CD4-positive, alpha-beta T cell (primary cell): ENCODE measurements at regions of chr5 and their contacts with region 1.

Region 1: DNA sequence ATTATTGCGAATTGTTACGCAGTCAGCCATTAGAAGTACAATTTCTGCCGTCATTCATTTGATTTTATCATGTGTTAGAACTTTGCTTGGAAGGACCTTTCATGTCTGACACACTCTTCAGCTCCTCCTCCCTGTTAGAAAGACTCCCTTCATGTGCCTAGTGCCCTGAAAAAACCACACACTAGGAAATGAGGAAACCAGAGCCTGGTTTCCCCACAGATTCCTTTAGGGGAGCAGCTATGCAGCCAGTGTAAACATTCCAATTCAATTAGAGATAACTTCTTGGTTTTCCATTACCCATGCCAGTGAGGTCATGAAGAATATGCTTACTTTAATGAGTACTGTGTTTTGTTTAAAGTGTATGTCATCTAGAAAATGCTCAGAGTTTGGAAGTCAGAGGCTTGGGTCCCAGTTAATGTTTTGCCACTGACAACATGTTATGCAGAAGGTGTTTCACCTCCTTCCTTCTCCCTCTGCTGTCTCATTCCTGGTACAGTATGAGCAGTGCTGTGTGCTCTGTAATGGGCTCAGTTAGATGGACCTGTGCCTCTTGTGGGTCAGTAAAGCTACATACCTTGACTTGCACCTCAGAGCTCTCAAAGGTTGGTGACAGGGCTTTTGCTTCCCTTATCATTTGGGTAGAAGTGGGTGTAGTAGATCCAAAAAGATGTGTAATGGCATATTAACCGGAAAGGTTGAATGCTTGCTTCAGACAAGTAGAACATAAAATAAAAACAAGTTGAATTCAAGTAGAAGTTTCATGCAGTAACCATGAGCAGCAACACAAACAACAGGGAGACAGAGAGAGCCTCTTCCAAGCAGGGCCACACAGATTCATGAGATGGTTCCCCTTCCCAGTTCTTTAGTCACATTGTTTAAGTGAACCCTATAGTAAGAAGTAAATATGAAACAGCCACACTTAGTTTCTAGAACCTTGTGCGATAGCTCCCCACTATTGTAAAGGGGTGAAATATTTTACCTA is 52.6 kb upstream of the TNFAIP8 start:
- DNase-seq: peak in 2 of 14 experiments; percentile 56 to 58
- ATAC-seq: peak; percentile 76
- H3K4me3 ChIP-seq: no peak overlapping the region
- H3K4me3 Mint-ChIP-seq: peak overlapping the region; percentile 73
- H3K27ac ChIP-seq: peak overlapping the region; percentile 54 to 72
- H3K27ac Mint-ChIP-seq: peak overlapping the region; percentile 95
- H3K4me1 ChIP-seq: peaks cover 59% of the 10 kb centered on the region
- H3K4me1 Mint-ChIP-seq: peaks cover 96% of the 10 kb centered on the region
- H3K27me3 ChIP-seq: no peaks in the 10 kb centered on the region
- H3K27me3 Mint-ChIP-seq: no peaks in the 10 kb centered on the region
- CTCF ChIP-seq: no peak

Region 2: GRCh38 chr5:119274767-119275130 is 28.5 kb before region 1 on chr5:
- CTCF ChIA-PET with region 1: interaction called, 3 read pairs
- POLR2A ChIA-PET with region 1: interaction called, 116 read pairs
- intact Hi-C with region 1: loop called (anchors 2 kb)
- DNase-seq: peak in 4 of 14 experiments; percentile 44 to 81 (median 70)
- ATAC-seq: peak; percentile 38
- H3K4me3 ChIP-seq: peak overlapping the region; percentile 69
- H3K4me3 Mint-ChIP-seq: peak overlapping the region; percentile 99
- H3K27ac ChIP-seq: peak overlapping the region; percentile 67 to 84
- H3K27ac Mint-ChIP-seq: peak overlapping the region; percentile 97
- H3K4me1 ChIP-seq: peaks cover 84% of the 10 kb centered on the region
- H3K4me1 Mint-ChIP-seq: peaks cover 96% of the 10 kb centered on the region
- H3K27me3 ChIP-seq: no peaks in the 10 kb centered on the region
- H3K27me3 Mint-ChIP-seq: peaks cover 6% of the 10 kb centered on the region
- CTCF ChIP-seq: no peak

Region 3: DNA sequence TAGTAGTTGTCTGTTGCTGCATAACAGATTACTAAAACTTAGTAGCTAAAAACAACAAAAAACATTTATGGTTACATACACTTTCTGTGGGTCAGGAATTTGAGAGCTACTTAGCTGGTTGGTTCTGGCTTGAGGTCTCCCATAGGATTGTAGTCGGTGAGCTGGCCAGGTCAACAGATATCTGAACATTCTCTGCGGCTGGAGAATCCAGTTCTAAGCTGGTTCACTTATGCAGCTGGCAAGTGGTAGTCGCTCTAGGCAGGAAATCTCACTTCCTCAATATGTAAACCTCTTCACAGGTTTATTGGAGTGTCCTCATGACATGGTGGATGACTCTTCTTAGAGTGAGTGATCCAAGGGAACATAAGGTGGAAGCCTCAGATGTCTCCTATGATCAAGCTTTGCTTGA is 13.0 kb before region 1 on chr5:
- CTCF ChIA-PET with region 1: interaction called, 4 read pairs
- POLR2A ChIA-PET with region 1: interaction called, 90 read pairs
- intact Hi-C with region 1: loop called in 1 of 2 experiments (anchors 2 kb)
- DNase-seq: peak in 4 of 14 experiments; percentile 23 to 69 (median 66)
- ATAC-seq: peak; percentile 28
- H3K4me3 ChIP-seq: peak overlapping the region; percentile 28
- H3K4me3 Mint-ChIP-seq: peak overlapping the region; percentile 76
- H3K27ac ChIP-seq: peak overlapping the region; percentile 68 to 89
- H3K27ac Mint-ChIP-seq: peak overlapping the region; percentile 97
- H3K4me1 ChIP-seq: peaks cover 42% of the 10 kb centered on the region
- H3K4me1 Mint-ChIP-seq: peaks cover 83% of the 10 kb centered on the region
- H3K27me3 ChIP-seq: no peaks in the 10 kb centered on the region
- H3K27me3 Mint-ChIP-seq: no peaks in the 10 kb centered on the region
- CTCF ChIP-seq: no peak

Region 4: GRCh38 chr5:119322948-119323537 is 19.8 kb after region 1 on chr5:
- CTCF ChIA-PET with region 1: interaction called, 3 read pairs
- POLR2A ChIA-PET with region 1: interaction called, 21 read pairs
- intact Hi-C with region 1: no loop called
- DNase-seq: peak in 1 of 14 experiments; percentile 55
- ATAC-seq: no peak
- H3K4me3 ChIP-seq: no peak overlapping the region
- H3K4me3 Mint-ChIP-seq: peak overlapping the region; percentile 77
- H3K27ac ChIP-seq: peak overlapping the region; percentile 42 to 60
- H3K27ac Mint-ChIP-seq: peak overlapping the region; percentile 97
- H3K4me1 ChIP-seq: peaks cover 95% of the 10 kb centered on the region
- H3K4me1 Mint-ChIP-seq: peaks cover 96% of the 10 kb centered on the region
- H3K27me3 ChIP-seq: no peaks in the 10 kb centered on the region
- H3K27me3 Mint-ChIP-seq: no peaks in the 10 kb centered on the region
- CTCF ChIP-seq: no peak